Natural killer cell (primary cell): ENCODE measurements at regions of chr1 and their contacts with region 1.

Region 1: GRCh38 chr1:148388260-148389027 is 94.7 kb downstream of the PPIAL4G start:
- DNase-seq: peak; percentile 80 to 94
- ATAC-seq: peak; percentile 91 to 92 (median 91)
- H3K4me3 ChIP-seq: peak overlapping the region; percentile 73
- H3K4me3 Mint-ChIP-seq: peak overlapping the region; percentile 93
- H3K27ac ChIP-seq: peak overlapping the region; percentile 97
- H3K27ac Mint-ChIP-seq: peak overlapping the region; percentile 97 to 100
- H3K4me1 ChIP-seq: peaks cover 11% of the 10 kb centered on the region
- H3K4me1 Mint-ChIP-seq: peaks cover 12 to 45% of the 10 kb centered on the region in 2 donors
- H3K27me3 ChIP-seq: no peaks in the 10 kb centered on the region
- H3K27me3 Mint-ChIP-seq: peaks cover 0 to 2% of the 10 kb centered on the region in 2 donors
- CTCF ChIP-seq: no peak

Region 2: GRCh38 chr1:148353461-148354283 is 34.8 kb before region 1 on chr1:
- intact Hi-C with region 1: no loop called
- DNase-seq: peak in 1 of 2 donors; percentile 38
- ATAC-seq: peak in 2 of 3 donors; percentile 30 to 64
- H3K4me3 ChIP-seq: no peak overlapping the region
- H3K4me3 Mint-ChIP-seq: no peak overlapping the region
- H3K27ac ChIP-seq: no peak overlapping the region
- H3K27ac Mint-ChIP-seq: peak overlapping the region in 1 of 2 donors; percentile 55
- H3K4me1 ChIP-seq: peaks cover 6% of the 10 kb centered on the region
- H3K4me1 Mint-ChIP-seq: peaks cover 0 to 20% of the 10 kb centered on the region in 2 donors
- H3K27me3 ChIP-seq: peaks cover 25% of the 10 kb centered on the region
- H3K27me3 Mint-ChIP-seq: peaks cover 69 to 100% of the 10 kb centered on the region in 2 donors
- CTCF ChIP-seq: no peak

Region 3: GRCh38 chr1:148372731-148373130 is 15.7 kb before region 1 on chr1:
- intact Hi-C with region 1: loop called (anchors 1 kb)
- DNase-seq: peak; percentile 29 to 86
- ATAC-seq: peak; percentile 66 to 90 (median 78)
- H3K4me3 ChIP-seq: no peak overlapping the region
- H3K4me3 Mint-ChIP-seq: peak overlapping the region; percentile 87
- H3K27ac ChIP-seq: peak overlapping the region; percentile 73
- H3K27ac Mint-ChIP-seq: peak overlapping the region; percentile 92 to 95
- H3K4me1 ChIP-seq: peaks cover 38% of the 10 kb centered on the region
- H3K4me1 Mint-ChIP-seq: peaks cover 23 to 24% of the 10 kb centered on the region in 2 donors
- H3K27me3 ChIP-seq: no peaks in the 10 kb centered on the region
- H3K27me3 Mint-ChIP-seq: no peaks in the 10 kb centered on the region
- CTCF ChIP-seq: no peak

Region 4: DNA sequence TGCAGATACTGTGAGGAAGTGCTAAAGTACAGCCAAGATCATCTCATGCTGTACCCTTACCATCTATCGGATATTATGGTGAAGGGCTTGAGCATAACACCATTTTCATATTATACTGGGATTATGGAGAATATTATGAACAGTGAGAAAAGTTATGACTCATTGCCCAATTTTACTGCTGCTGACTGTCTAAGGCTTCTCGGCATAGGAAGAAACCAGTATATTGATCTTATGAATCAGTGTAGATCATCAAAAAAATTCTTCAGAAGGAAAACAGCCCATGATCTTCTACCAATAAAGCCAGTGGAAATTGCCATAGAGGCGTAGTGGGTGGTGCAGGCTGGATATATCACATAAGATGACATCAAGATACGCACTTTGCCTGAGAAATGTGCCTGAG is 47.0 kb after region 1 on chr1:
- intact Hi-C with region 1: loop called (anchors 10 kb)
- DNase-seq: no peak
- ATAC-seq: no peak
- H3K4me3 ChIP-seq: no peak overlapping the region
- H3K4me3 Mint-ChIP-seq: no peak overlapping the region
- H3K27ac ChIP-seq: no peak overlapping the region
- H3K27ac Mint-ChIP-seq: peak overlapping the region; percentile 16 to 60
- H3K4me1 ChIP-seq: peaks cover 10% of the 10 kb centered on the region
- H3K4me1 Mint-ChIP-seq: peaks cover 65 to 68% of the 10 kb centered on the region in 2 donors
- H3K27me3 ChIP-seq: no peaks in the 10 kb centered on the region
- H3K27me3 Mint-ChIP-seq: no peaks in the 10 kb centered on the region
- CTCF ChIP-seq: no peak